Activated CD4-positive, alpha-beta memory T cell treated with anti-CD3 and anti-CD28 coated beads for 36 hours (primary cell): ENCODE measurements at regions of chr9 and their contacts with region 1.

Region 1: DNA sequence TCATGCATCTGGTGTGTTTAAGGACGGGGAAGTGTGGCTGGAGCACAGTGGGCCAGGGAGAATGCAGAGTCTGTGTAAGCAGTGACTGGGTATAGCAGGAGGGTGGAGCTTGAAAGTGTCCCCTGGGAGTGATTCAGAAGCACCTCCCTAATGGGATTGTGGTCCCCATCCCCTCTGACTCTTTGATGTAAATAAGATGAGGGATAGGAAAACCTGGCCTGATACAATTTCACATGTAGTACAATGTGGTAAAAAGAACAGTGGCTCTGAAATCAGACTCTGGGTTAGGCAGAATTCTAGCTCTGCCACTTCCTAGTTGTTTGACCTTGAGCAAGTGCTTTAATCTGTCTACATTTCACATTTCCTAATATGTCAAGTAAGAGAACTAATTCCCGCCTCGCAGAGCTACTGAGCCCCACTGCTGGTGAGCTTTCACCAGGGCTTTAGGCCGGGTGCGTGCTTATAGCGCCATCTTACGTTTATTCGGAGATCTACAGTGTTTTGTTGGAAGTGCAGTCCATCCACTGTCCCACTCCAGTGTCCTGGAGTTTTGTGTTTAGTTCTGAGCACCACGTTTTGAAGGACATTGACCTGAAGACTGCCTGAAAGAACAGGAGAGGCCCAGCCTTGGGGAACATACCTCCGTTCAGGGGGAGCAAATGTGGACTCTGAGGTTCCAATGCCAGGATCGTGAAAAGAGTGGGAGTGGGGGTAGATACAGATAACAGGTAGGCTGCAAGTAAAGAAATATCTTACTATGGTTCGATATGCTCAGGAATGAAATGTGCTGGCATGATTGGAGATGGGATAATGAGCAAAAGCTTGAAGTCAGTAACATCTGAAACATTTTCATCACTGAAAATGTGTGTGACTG is 51.2 kb upstream of the TESK1 start:
- DNase-seq: peak; percentile 61
- H3K4me3 Mint-ChIP-seq: no peak overlapping the region
- H3K27ac Mint-ChIP-seq: no peak overlapping the region
- H3K4me1 Mint-ChIP-seq: no peaks in the 10 kb centered on the region
- H3K27me3 Mint-ChIP-seq: no peaks in the 10 kb centered on the region

Region 2: DNA sequence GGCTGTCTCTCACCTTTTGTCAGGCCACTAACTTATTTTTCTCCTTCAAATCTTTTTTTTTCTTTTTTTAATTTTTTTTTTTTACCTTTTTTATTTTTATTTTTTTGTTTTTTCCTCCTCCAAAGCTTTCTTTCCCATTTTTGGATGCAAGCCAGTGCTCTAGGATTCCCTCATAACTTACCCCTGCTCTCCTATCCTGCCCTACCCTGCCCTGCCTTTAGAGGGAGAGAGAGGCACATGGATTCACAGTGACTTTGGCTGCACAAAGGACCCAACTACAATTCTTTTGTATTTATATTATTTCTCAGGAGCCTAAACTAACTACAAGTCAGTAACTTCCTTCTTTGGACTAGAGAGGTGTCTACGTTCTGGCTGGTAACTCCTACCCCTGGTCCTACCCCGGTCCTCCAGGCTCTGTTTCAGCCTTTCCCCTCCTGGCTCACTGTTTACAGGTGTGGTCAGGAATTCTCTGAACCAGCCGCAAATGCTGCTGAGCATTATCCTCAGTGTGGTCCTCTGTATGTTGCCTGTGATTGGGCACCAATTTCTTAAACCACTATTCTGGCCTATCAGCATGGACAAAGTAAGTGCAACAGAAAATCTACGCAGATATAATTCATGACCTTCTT is 72.4 kb before region 1 on chr9:
- CTCF ChIA-PET with region 1: interaction called, 37 read pairs
- POLR2A ChIA-PET with region 1: no interaction called
- intact Hi-C with region 1: loop called (anchors 1 kb)
- DNase-seq: peak; percentile 44
- H3K4me3 Mint-ChIP-seq: no peak overlapping the region
- H3K27ac Mint-ChIP-seq: no peak overlapping the region
- H3K4me1 Mint-ChIP-seq: no peaks in the 10 kb centered on the region
- H3K27me3 Mint-ChIP-seq: no peaks in the 10 kb centered on the region

Region 3: DNA sequence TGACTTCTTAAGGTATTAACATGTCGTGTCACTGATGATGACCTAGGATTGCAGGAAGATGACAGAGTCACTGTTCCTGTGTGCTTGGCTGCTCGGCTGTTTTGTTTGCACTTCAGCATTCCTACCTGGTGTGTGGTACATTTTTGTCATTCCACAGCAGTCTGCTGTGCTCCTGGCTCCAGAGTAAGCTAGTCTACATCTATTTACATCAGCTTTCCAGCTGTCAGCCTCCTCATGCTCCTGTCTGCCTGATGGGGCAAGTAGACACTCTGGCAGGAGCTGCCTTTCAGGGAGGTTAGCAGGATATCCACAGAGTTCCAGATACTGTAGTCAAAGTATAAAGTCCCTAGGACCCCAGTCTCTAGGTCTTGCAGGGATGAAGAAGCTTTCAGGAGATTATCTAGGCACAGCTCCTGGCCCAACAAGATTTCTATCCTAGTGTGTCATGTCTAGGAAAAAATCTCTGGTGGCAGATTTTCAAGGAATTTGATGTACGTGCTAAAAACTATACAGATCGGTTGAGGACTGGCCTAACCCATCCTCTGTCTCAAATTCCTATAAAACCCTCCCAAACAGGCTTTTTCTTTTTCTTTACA is 35.6 kb before region 1 on chr9:
- CTCF ChIA-PET with region 1: interaction called, 20 read pairs
- POLR2A ChIA-PET with region 1: no interaction called
- intact Hi-C with region 1: no loop called
- DNase-seq: no peak
- H3K4me3 Mint-ChIP-seq: no peak overlapping the region
- H3K27ac Mint-ChIP-seq: no peak overlapping the region
- H3K4me1 Mint-ChIP-seq: no peaks in the 10 kb centered on the region
- H3K27me3 Mint-ChIP-seq: no peaks in the 10 kb centered on the region

Region 4: DNA sequence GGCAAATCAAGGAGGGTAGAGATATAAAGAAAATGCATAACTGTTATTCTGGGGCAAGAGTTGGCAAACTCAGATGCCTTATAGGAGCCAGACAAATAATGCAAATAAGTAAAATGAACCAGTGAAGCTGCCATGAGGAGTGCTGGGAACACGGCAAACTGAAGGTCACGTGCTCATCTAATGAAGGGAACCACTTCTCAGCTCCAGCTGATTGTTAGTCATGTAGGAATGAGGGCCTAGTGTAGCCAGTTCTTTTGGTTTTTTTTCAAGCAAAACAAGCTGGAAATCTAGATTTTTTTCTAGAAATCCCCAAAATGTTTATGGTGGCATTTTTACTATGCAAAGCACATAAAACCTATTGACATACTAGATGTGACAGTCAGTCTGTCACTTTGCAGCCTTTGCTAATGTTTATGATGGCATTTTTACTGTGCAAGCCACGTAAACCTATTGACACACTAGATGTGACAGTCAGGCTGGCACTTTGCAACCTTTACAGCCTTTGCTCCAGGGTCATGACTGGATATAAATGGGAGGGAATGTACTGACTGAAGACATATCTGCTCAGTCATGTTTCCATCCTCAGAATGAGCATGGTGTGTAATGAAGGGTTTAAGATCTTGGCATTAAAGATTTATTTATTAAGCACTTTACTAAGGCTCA is 24.6 kb before region 1 on chr9:
- CTCF ChIA-PET with region 1: interaction called, 11 read pairs
- POLR2A ChIA-PET with region 1: no interaction called
- intact Hi-C with region 1: no loop called
- DNase-seq: no peak
- H3K4me3 Mint-ChIP-seq: no peak overlapping the region
- H3K27ac Mint-ChIP-seq: no peak overlapping the region
- H3K4me1 Mint-ChIP-seq: peaks cover 2% of the 10 kb centered on the region
- H3K27me3 Mint-ChIP-seq: no peaks in the 10 kb centered on the region